ENCODE measurements at regions of chr1 and their contacts with region 1.

Region 1: GRCh38 chr1:22259551-22260282 is 116.8 kb upstream of the WNT4 start:
- DNase-seq: peak in 5 of 7 donors; percentile 27 to 62 (median 35)
- H3K4me3 ChIP-seq: no peak overlapping the region
- H3K27ac ChIP-seq: peak overlapping the region in 2 of 5 donors; percentile 38 to 45
- H3K4me1 ChIP-seq: no peaks in the 10 kb centered on the region
- H3K27me3 ChIP-seq: no peaks in the 10 kb centered on the region
- CTCF ChIP-seq: no peak
- POLR2A ChIP-seq: no peak

Region 2: GRCh38 chr1:22210636-22211035 is 49.1 kb before region 1 on chr1:
- intact Hi-C with region 1: loop called in 1 of 2 experiments (anchors 2 kb)
- DNase-seq: no peak
- H3K4me3 ChIP-seq: no peak overlapping the region
- H3K27ac ChIP-seq: no peak overlapping the region
- H3K4me1 ChIP-seq: no peaks in the 10 kb centered on the region
- H3K27me3 ChIP-seq: no peaks in the 10 kb centered on the region
- CTCF ChIP-seq: no peak
- POLR2A ChIP-seq: no peak

Region 3: DNA sequence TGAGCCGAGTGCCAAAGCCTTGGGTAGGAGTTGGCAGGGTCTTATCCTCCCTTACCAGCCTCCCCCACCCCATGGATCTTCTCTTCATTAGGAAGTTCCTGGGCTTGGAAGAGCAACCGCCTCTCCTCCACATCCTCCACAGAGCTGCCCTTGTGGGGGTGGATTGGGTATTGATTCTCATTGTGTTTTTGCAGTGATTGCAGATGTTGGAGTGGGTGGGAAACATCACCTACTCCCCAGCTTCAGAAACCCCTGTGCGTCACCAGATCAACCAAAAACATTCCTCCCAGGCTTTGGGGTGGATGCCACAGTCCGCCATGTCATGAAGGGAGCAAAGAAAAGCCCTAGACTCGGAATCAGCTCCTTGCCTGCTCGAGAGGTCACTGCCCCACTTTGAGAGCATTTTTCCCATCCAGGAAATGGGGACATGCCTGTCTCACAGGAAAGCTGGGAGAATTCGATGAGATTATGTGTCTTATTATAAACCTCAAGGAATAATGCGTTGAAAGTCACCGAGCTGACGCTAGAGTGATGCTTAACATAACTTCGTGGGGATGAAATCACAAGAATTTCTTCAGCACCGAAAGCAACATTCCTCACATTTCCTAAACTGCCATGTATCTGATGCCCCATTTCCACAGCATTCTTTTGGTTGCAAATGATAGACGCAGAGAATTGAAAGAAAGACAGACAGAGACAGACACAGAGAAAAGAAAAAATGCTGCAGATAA is 147.2 kb after region 1 on chr1:
- intact Hi-C with region 1: loop called in 1 of 2 experiments (anchors 10 kb)
- DNase-seq: no peak
- H3K4me3 ChIP-seq: no peak overlapping the region
- H3K27ac ChIP-seq: no peak overlapping the region
- H3K4me1 ChIP-seq: no peaks in the 10 kb centered on the region
- H3K27me3 ChIP-seq: no peaks in the 10 kb centered on the region
- CTCF ChIP-seq: no peak
- POLR2A ChIP-seq: no peak

Measured in adrenal gland (tissue), 19 donors.